ENCODE measurements at regions of chr13 and their contacts with region 1.

Region 1: DNA sequence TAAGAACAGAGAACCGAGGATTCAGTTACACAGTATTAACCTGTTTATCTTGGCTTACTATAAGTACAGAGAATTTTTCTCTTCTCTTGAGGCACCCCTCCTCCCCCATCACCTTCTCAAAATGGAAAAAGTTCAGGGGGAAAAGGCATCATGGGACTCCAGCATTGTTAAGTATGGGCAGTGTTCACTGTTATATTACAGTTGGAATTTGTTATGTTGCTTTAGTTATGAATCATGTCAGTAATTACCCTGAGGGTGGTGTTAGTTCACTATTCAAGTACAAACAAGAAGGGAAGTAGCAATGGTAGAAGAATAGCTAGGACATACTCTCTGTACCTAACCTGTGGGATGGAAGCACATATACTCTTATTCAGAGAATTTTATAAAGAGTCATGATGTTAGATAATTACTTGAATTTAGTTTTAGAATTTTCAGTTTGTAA is 12.0 kb downstream of the LPAR6 start:
- DNase-seq: peak in 2 of 5 donors; percentile 19 to 33
- H3K4me3 ChIP-seq: peak overlapping the region in 1 of 2 donors; percentile 21
- H3K4me3 Mint-ChIP-seq: peak overlapping the region; percentile 1 to 81 (median 67)
- H3K27ac ChIP-seq: peak overlapping the region; percentile 0
- H3K27ac Mint-ChIP-seq: peak overlapping the region; percentile 53 to 94 (median 77)
- H3K4me1 ChIP-seq: peaks cover 79% of the 10 kb centered on the region
- H3K4me1 Mint-ChIP-seq: peaks cover 47 to 89% (median 67%) of the 10 kb centered on the region in 4 donors
- H3K27me3 ChIP-seq: no peaks in the 10 kb centered on the region
- H3K27me3 Mint-ChIP-seq: no peaks in the 10 kb centered on the region

Region 2: GRCh38 chr13:48334534-48335127 is 66.2 kb before region 1 on chr13:
- CTCF ChIA-PET with region 1: interaction called, 7 read pairs
- POLR2A ChIA-PET with region 1: no interaction called
- intact Hi-C with region 1: loop called (anchors 1 kb)
- DNase-seq: peak in 4 of 5 donors; percentile 50 to 55 (median 52)
- H3K4me3 ChIP-seq: no peak overlapping the region
- H3K4me3 Mint-ChIP-seq: no peak overlapping the region
- H3K27ac ChIP-seq: no peak overlapping the region
- H3K27ac Mint-ChIP-seq: peak overlapping the region in 1 of 7 donors; percentile 13
- H3K4me1 ChIP-seq: peaks cover 8% of the 10 kb centered on the region
- H3K4me1 Mint-ChIP-seq: peaks cover 6 to 16% (median 10%) of the 10 kb centered on the region in 4 donors
- H3K27me3 ChIP-seq: no peaks in the 10 kb centered on the region
- H3K27me3 Mint-ChIP-seq: no peaks in the 10 kb centered on the region

Region 3: GRCh38 chr13:48412881-48413351 is 12.0 kb after region 1 on chr13 and contains the start of gene LPAR6:
- CTCF ChIA-PET with region 1: interaction called, 5 read pairs
- POLR2A ChIA-PET with region 1: interaction called, 19 read pairs
- intact Hi-C with region 1: loop called (anchors 1 kb)
- DNase-seq: peak; percentile 45 to 59 (median 47)
- H3K4me3 ChIP-seq: peak within 1 kb of the TSS; percentile 67 to 90
- H3K4me3 Mint-ChIP-seq: peak within 1 kb of the TSS; percentile 89 to 100 (median 98)
- H3K27ac ChIP-seq: peak within 1 kb of the TSS; percentile 84
- H3K27ac Mint-ChIP-seq: peak within 1 kb of the TSS; percentile 94 to 99 (median 98)
- H3K4me1 ChIP-seq: peaks cover 50% of the 10 kb centered on the region
- H3K4me1 Mint-ChIP-seq: peaks cover 18 to 50% (median 36%) of the 10 kb centered on the region in 4 donors
- H3K27me3 ChIP-seq: no peaks in the 10 kb centered on the region
- H3K27me3 Mint-ChIP-seq: no peaks in the 10 kb centered on the region
- total RNA-seq, gene LPAR6: 89.0 to 91.1 TPM

Region 4: DNA sequence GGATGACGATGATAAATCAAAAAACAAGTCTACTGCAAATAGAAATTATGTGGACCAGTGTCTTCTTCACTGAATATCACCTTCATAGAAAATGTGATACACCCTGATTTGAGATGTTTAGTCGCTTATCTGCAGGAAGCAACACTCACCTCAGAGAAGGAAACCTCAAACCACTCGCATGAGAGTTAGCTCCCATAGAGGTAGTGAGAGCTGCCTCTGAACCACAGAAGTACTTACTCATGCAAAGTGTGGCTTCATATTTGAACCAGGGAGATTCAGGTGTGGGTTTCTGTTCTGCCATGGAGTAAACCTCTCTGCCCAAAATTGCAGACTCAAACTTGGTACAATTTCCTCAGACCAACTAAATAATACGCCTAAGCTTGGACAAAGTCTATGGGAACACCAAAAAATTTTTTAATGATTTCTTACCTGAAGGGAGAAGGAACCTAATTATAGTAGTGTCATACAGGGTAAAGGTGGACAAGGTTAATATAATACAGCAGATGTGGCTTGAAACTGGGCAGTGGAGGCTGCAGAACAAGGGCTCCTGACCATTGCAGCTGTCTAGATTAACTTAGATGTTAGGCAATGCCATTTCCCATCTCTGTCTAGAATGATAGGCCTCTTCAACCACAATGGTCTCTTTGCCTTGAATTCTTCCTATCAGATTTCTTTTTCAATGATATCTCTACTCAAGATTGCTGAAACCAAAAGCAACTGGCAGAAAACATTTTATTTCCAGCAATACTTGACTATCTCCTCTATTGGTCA is 161.6 kb after region 1 on chr13:
- CTCF ChIA-PET with region 1: interaction called, 4 read pairs
- POLR2A ChIA-PET with region 1: interaction called, 10 read pairs
- intact Hi-C with region 1: loop called (anchors 1 kb)
- DNase-seq: peak; percentile 83 to 92 (median 87)
- H3K4me3 ChIP-seq: peak overlapping the region in 1 of 2 donors; percentile 39
- H3K4me3 Mint-ChIP-seq: peak overlapping the region in 7 of 8 donors; percentile 42 to 79 (median 76)
- H3K27ac ChIP-seq: no peak overlapping the region
- H3K27ac Mint-ChIP-seq: peak overlapping the region in 6 of 7 donors; percentile 44 to 89 (median 62)
- H3K4me1 ChIP-seq: peaks cover 56% of the 10 kb centered on the region
- H3K4me1 Mint-ChIP-seq: peaks cover 45 to 68% (median 58%) of the 10 kb centered on the region in 4 donors
- H3K27me3 ChIP-seq: no peaks in the 10 kb centered on the region
- H3K27me3 Mint-ChIP-seq: no peaks in the 10 kb centered on the region

Region 5: DNA sequence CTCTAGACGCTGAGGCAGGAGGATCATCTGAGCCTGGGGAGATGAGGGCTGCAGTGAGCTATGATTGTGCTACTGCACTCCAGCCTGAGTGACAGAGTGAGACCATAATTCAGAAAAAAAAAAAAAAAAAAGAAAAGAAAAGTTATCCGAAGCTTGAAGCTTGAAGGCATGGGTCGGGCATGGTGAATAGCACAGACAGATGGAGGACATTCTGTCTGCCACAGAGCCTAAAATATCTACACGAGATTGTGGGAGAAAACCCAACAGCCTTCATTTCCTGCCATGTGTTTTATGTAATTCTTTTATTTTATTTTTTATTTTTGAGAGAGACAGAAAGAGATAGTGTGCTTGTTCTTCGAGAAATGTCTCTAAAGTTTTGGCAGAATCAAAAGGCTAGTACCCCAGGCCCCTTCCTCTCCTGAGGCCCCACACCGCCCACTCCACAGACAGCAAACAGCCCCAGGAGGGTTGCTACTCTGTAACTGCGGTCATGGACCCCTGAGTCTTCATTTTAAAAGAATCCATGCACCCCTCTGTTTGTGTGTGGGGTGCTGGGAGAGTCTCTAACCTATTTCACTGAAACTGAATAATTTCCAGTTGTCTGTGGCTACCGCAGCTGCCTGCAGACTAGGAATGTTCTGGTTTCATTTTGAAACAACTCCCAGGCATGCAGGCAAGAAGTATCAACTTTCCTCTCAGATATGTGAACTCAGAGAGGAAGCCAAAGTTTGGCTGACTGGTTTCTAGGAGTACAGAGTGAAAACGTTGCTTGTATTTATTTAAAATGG is 170.4 kb after region 1 on chr13:
- CTCF ChIA-PET with region 1: interaction called, 8 read pairs
- POLR2A ChIA-PET with region 1: interaction called, 10 read pairs
- intact Hi-C with region 1: no loop called
- DNase-seq: no peak
- H3K4me3 ChIP-seq: no peak overlapping the region
- H3K4me3 Mint-ChIP-seq: peak overlapping the region in 5 of 8 donors; percentile 12 to 47 (median 31)
- H3K27ac ChIP-seq: no peak overlapping the region
- H3K27ac Mint-ChIP-seq: peak overlapping the region in 3 of 7 donors; percentile 14 to 66 (median 25)
- H3K4me1 ChIP-seq: peaks cover 43% of the 10 kb centered on the region
- H3K4me1 Mint-ChIP-seq: peaks cover 17 to 54% (median 33%) of the 10 kb centered on the region in 4 donors
- H3K27me3 ChIP-seq: no peaks in the 10 kb centered on the region
- H3K27me3 Mint-ChIP-seq: peaks cover 0 to 2% of the 10 kb centered on the region in 2 donors

Region 6: GRCh38 chr13:48580185-48580803 is 179.4 kb after region 1 on chr13:
- CTCF ChIA-PET with region 1: interaction called, 117 read pairs
- POLR2A ChIA-PET with region 1: interaction called, 17 read pairs
- intact Hi-C with region 1: loop called (anchors 1 kb)
- DNase-seq: peak; percentile 64 to 74 (median 70)
- H3K4me3 ChIP-seq: no peak overlapping the region
- H3K4me3 Mint-ChIP-seq: peak overlapping the region in 1 of 8 donors; percentile 31
- H3K27ac ChIP-seq: no peak overlapping the region
- H3K27ac Mint-ChIP-seq: peak overlapping the region in 2 of 7 donors; percentile 0 to 43
- H3K4me1 ChIP-seq: peaks cover 19% of the 10 kb centered on the region
- H3K4me1 Mint-ChIP-seq: peaks cover 4 to 28% (median 13%) of the 10 kb centered on the region in 4 donors
- H3K27me3 ChIP-seq: no peaks in the 10 kb centered on the region
- H3K27me3 Mint-ChIP-seq: peaks cover 0 to 4% of the 10 kb centered on the region in 2 donors

Region 7: DNA sequence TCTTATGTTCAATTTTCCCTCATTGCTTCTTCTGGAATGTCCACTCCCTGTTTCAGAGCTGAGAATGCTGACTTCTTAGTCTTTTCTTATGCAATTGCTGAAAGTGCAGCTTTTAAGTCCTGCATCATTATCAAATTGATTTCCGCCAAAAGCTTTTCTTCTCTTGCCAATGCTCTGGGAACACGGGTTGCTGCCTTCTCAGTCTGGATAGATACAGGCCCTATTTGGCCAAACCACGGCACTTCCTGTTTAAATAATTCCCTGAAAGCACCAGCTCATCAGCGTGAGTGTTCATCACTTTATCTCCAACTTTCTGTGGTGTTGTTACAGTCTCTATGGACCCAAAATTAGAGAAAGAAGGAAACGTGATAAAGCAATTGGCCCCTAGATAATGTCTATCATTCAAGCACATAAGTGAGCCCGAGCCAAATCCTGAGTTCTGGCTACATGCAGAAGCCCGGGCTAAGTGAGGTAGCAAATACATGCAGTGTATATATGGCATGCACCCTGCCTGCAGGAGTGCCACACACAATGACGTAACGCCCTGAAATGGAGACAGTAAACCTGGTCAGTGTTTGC is 338.6 kb after region 1 on chr13:
- CTCF ChIA-PET with region 1: no interaction called
- POLR2A ChIA-PET with region 1: no interaction called
- intact Hi-C with region 1: no loop called
- DNase-seq: no peak
- H3K4me3 ChIP-seq: no peak overlapping the region
- H3K4me3 Mint-ChIP-seq: no peak overlapping the region
- H3K27ac ChIP-seq: no peak overlapping the region
- H3K27ac Mint-ChIP-seq: no peak overlapping the region
- H3K4me1 ChIP-seq: no peaks in the 10 kb centered on the region
- H3K4me1 Mint-ChIP-seq: no peaks in the 10 kb centered on the region
- H3K27me3 ChIP-seq: no peaks in the 10 kb centered on the region
- H3K27me3 Mint-ChIP-seq: no peaks in the 10 kb centered on the region

Measured in CD4-positive, alpha-beta memory T cell (primary cell).